Activated CD4-positive, alpha-beta T cell treated with anti-CD3 and anti-CD28 coated beads for 36 hours (primary cell): ENCODE measurements at regions of chr1 and their contacts with region 1.

Region 1: GRCh38 chr1:153783233-153784190 is 8.3 kb downstream of the SLC27A3 start:
- DNase-seq: peak; percentile 95
- ATAC-seq: peak; percentile 96
- H3K4me3 Mint-ChIP-seq: peak overlapping the region; percentile 90
- H3K27ac Mint-ChIP-seq: peak overlapping the region; percentile 97
- H3K4me1 Mint-ChIP-seq: peaks cover 12% of the 10 kb centered on the region
- H3K27me3 Mint-ChIP-seq: no peaks in the 10 kb centered on the region

Region 2: GRCh38 chr1:152786077-152786476 is 997.4 kb before region 1 on chr1 and contains the start of gene LCE1E:
- CTCF ChIA-PET with region 1: no interaction called
- POLR2A ChIA-PET with region 1: no interaction called
- intact Hi-C with region 1: no loop called
- DNase-seq: no peak
- ATAC-seq: no peak
- H3K4me3 Mint-ChIP-seq: no peak within 1 kb of the TSS
- H3K27ac Mint-ChIP-seq: no peak within 1 kb of the TSS
- H3K4me1 Mint-ChIP-seq: no peaks in the 10 kb centered on the region
- H3K27me3 Mint-ChIP-seq: peaks cover 22% of the 10 kb centered on the region
- total RNA-seq, gene LCE1E: not detected

Region 3: GRCh38 chr1:153545067-153546055 is 238.2 kb before region 1 on chr1 and contains the start of gene S100A4:
- CTCF ChIA-PET with region 1: no interaction called
- POLR2A ChIA-PET with region 1: no interaction called
- intact Hi-C with region 1: loop called in 1 of 2 experiments (anchors 1 kb)
- DNase-seq: peak; percentile 97
- ATAC-seq: peak; percentile 83
- H3K4me3 Mint-ChIP-seq: peak within 1 kb of the TSS; percentile 78
- H3K27ac Mint-ChIP-seq: peak within 1 kb of the TSS; percentile 96
- H3K4me1 Mint-ChIP-seq: peaks cover 70% of the 10 kb centered on the region
- H3K27me3 Mint-ChIP-seq: no peaks in the 10 kb centered on the region
- total RNA-seq, gene S100A4: 84.8 to 166 TPM

Region 4: DNA sequence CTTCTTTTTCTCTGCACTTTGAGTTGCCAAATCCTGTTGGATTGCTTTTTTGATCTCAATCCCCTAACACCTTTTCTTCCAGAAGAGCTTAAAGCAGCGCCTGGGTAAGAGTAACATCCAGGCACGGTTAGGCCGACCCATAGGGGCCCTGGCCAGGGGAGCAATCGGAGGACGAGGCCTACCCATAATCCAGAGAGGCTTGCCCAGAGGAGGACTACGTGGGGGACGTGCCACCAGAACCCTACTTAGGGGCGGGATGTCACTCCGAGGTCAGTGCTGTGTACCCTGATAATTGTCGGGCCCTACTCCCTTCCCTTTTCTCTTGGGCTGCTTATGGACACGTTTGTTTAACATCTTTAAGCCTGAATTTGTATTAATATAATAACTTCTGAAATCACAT is 141.4 kb before region 1 on chr1:
- CTCF ChIA-PET with region 1: no interaction called
- POLR2A ChIA-PET with region 1: no interaction called
- intact Hi-C with region 1: no loop called
- DNase-seq: no peak
- ATAC-seq: no peak
- H3K4me3 Mint-ChIP-seq: no peak overlapping the region
- H3K27ac Mint-ChIP-seq: peak overlapping the region; percentile 39
- H3K4me1 Mint-ChIP-seq: peaks cover 45% of the 10 kb centered on the region
- H3K27me3 Mint-ChIP-seq: no peaks in the 10 kb centered on the region

Region 5: DNA sequence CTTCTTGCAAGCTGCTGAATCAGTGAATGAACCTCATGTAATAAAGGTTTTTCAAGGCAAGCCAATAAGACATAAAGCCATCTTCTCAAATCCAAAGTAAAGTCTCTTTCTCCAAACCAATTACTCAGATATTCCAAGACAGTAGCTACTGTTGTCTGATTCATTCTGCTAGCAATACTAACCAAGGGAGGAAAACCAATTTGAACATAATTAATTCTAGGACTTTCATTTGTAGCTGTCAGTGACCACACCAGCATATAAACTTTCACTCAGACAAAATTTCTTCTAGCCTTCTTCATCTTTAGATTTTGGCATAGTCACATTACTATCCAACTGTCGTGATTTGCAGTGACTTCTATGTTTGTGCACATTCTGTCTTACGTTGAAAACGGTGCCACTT is 66.2 kb before region 1 on chr1:
- CTCF ChIA-PET with region 1: no interaction called
- POLR2A ChIA-PET with region 1: no interaction called
- intact Hi-C with region 1: no loop called
- DNase-seq: no peak
- ATAC-seq: peak; percentile 83
- H3K4me3 Mint-ChIP-seq: no peak overlapping the region
- H3K27ac Mint-ChIP-seq: no peak overlapping the region
- H3K4me1 Mint-ChIP-seq: peaks cover 12% of the 10 kb centered on the region
- H3K27me3 Mint-ChIP-seq: peaks cover 9% of the 10 kb centered on the region

Region 6: DNA sequence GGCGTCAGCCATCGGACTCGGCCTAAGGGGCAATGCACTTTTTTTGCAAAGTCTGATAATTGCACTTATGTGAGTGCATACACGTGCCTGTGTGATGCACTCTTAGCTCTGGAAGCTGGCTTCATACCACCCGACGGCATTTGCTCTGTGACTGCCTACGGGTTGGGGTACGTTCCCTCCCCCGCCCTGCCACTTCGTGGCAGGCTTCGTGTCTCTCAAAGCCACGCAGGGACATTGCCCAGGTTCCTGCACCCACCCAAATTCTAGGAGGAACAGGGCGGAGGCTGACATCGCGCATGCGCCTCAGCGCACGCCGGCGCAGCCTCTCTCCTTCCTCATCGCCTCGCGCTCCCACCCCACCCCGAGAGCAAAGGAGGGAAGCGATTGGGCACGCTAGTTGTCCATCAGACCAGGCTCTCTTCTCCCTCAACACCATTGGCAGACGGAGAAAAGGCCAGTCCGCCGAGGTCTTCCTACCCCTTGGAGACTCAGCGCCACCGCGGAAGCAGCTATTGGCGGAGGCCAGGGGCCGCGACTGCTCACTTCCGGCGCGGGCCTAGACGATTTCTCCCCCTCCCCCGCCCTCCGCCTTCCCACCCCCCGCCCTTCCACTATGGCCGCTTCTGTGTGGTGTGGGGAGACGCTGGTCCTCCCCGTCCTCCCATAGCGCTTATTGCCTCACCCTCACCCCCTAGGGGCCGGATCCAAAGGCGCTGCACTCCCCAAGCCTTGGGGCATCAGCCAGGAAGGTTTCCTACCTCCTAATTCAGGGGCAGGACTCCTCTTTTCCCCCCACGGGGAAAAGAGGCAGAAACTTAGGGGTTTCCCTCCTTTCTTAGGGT is 55.8 kb before region 1 on chr1 and contains the start of gene INTS3:
- CTCF ChIA-PET with region 1: no interaction called
- POLR2A ChIA-PET with region 1: no interaction called
- intact Hi-C with region 1: loop called in 1 of 2 experiments (anchors 1 kb)
- DNase-seq: peak; percentile 99
- ATAC-seq: peak; percentile 99
- H3K4me3 Mint-ChIP-seq: peak within 1 kb of the TSS; percentile 93
- H3K27ac Mint-ChIP-seq: peak within 1 kb of the TSS; percentile 95
- H3K4me1 Mint-ChIP-seq: peaks cover 44% of the 10 kb centered on the region
- H3K27me3 Mint-ChIP-seq: no peaks in the 10 kb centered on the region
- total RNA-seq, gene INTS3: 52.0 to 58.0 TPM

Region 7: DNA sequence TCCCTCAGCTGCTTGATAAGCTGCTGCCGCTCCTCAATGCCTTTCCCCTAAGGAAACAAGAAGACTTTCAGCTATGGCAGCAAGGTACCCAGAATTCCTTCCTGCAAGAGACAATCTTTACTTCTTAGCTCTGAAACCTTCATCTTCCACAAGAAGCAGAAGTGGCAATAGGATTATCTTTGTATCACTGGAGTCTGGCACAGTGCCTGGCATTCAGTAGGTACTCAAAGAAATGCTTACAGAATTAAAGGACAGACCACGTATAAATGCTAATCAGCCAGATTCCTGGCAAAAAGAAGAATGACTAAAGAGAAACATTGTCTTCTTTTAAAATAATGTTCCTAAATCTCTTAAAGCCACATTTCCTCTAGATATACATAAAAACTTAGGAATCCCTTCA is 35.4 kb after region 1 on chr1:
- CTCF ChIA-PET with region 1: no interaction called
- POLR2A ChIA-PET with region 1: no interaction called
- intact Hi-C with region 1: no loop called
- DNase-seq: no peak
- ATAC-seq: no peak
- H3K4me3 Mint-ChIP-seq: no peak overlapping the region
- H3K27ac Mint-ChIP-seq: no peak overlapping the region
- H3K4me1 Mint-ChIP-seq: no peaks in the 10 kb centered on the region
- H3K27me3 Mint-ChIP-seq: no peaks in the 10 kb centered on the region

Region 8: DNA sequence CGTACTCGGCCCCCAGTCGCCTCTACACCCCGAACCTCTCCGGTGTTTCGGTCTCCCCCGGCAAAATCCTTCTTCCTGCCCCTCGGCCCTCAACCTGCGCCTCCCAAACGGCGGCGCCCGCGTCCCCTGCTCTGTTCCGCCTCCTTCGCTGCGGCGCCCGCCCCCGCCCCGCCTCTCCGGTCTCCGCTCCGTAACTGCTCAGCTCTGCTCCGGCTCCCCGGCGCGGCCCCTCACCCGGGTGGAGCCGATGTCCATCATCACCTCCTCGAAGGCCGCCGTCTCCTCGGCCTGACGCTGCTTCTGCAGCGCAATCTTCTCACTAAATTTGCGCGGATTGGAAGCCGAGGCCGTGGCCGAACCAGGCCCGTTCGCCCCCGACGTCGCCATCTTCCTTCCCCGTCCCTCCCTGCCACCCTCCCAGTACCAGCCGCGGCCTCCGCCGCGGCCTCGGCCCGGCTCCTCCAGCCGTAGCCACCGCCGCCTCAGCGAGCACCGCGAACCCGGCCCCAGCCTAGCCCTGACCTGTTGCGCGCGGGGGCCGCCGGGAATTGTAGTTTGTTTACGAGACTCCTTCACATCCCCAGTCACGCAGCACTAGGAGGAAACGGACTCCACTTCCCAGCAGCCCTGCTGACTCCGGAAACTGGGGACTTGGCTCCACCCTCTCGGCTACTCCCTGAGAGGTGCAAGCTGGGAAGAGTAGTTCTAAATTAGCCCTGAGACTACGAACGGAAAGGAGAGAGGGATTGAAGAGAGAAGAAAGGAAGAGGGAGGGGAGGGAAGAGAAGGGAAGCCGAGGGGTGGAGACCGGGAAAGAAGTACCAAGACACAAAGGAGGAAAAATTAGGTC is 174.8 kb after region 1 on chr1 and contains the start of gene CRTC2:
- CTCF ChIA-PET with region 1: no interaction called
- POLR2A ChIA-PET with region 1: no interaction called
- intact Hi-C with region 1: loop called in 1 of 2 experiments (anchors 1 kb)
- DNase-seq: peak; percentile 99
- ATAC-seq: peak; percentile 90
- H3K4me3 Mint-ChIP-seq: peak within 1 kb of the TSS; percentile 99
- H3K27ac Mint-ChIP-seq: peak within 1 kb of the TSS; percentile 95
- H3K4me1 Mint-ChIP-seq: peaks cover 55% of the 10 kb centered on the region
- H3K27me3 Mint-ChIP-seq: no peaks in the 10 kb centered on the region
- total RNA-seq, gene CRTC2: 60.6 to 80.4 TPM

Region 9: GRCh38 chr1:154104433-154105082 is 321.0 kb after region 1 on chr1:
- CTCF ChIA-PET with region 1: no interaction called
- POLR2A ChIA-PET with region 1: interaction called, 11 read pairs
- intact Hi-C with region 1: no loop called
- DNase-seq: no peak
- ATAC-seq: no peak
- H3K4me3 Mint-ChIP-seq: no peak overlapping the region
- H3K27ac Mint-ChIP-seq: no peak overlapping the region
- H3K4me1 Mint-ChIP-seq: no peaks in the 10 kb centered on the region
- H3K27me3 Mint-ChIP-seq: no peaks in the 10 kb centered on the region